BJ (cell line): ENCODE measurements at regions of chr10 and their contacts with region 1.

Region 1: DNA sequence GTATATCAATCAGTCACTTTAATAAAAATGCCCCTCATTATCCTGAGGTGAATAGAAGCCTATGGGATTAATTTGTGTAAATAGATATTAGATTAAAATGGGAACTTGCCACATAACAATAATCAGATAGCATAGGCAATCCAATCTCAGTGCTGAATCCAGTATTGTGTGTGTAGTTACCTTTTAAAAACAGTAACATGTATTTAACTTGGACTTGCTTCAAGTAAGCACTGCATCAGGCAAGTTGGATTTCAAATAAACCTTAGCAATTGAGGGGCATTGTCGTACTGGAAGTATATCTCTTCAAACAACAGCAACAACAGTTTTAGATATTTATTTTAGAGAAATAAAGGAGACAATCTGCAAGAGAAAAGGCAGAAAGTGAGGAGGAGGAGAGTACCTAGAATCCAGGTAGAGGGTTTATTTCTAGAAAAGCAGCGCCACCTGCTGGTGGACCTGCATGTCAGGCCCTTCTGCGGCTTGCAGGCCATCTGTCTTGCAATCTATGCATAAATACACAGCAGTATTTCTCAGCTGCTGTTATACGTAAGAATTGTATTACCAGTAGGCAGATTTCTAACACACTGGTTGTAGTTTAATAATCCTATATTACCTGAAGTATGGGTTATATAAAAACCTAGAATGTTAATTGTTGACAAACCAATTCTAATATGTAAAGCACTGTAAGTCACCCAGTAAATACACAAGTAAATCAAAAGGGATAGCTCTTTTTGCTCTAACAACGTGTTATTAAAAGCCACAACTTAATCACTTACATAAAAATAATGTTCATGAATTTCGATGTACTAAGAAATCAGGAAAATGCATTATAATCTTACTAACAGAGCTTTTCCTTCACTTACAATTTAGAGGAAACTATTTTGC is 652.8 kb downstream of the KCNMA1 start:
- DNase-seq: no peak
- H3K4me3 ChIP-seq: no peak overlapping the region
- H3K27me3 ChIP-seq: no peaks in the 10 kb centered on the region
- CTCF ChIP-seq: peak; percentile 93

Region 2: DNA sequence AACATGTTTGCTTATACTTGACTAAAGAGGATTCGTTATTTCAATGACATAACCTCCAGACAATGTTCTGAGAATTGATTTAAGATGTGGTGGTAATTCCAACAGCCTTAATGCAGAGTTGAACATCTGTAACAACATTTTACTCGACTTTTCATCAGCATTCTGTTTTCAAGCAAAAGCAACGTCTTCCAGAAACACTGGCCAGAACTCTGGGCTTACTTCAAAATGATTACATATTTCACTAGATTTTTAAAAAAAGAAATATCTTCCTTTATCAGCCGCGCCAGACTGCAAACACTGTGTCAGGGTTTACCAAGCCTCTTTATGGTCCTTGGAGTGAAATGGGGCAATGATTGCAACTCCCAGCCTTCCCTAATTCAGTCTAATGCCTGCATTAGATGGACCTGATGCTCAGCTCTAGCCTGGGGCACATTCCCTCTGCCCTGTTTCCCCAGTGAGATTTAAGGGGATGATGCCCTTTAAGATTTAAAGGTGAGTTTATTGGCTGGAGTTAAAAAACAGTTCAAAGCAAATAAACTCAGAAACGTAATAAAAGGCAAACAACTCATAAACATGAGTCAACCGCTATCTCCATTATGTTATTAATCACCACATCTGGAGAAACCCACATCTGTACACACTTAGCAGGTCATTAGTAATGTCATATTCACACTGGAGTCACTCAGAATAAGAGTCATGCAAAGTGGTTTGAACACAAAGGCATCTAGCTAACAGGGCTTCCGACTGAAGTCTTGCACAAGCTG is 11.1 kb before region 1 on chr10:
- CTCF ChIA-PET with region 1: interaction called, 12 read pairs
- POLR2A ChIA-PET with region 1: no interaction called
- DNase-seq: peak; percentile 83
- H3K4me3 ChIP-seq: no peak overlapping the region
- H3K27me3 ChIP-seq: 0 out of 2 replicates have a peak, but pooled peaks cover 1% of the 10 kb centered on the region
- CTCF ChIP-seq: no peak

Region 3: GRCh38 chr10:77104459-77104980 is 119.7 kb after region 1 on chr10:
- CTCF ChIA-PET with region 1: no interaction called
- POLR2A ChIA-PET with region 1: no interaction called
- DNase-seq: peak; percentile 67
- H3K4me3 ChIP-seq: no peak overlapping the region
- H3K27me3 ChIP-seq: no peaks in the 10 kb centered on the region
- CTCF ChIP-seq: no peak